GM13977 (cell line): ENCODE measurements at regions of chr9 and their contacts with region 1.

Region 1: DNA sequence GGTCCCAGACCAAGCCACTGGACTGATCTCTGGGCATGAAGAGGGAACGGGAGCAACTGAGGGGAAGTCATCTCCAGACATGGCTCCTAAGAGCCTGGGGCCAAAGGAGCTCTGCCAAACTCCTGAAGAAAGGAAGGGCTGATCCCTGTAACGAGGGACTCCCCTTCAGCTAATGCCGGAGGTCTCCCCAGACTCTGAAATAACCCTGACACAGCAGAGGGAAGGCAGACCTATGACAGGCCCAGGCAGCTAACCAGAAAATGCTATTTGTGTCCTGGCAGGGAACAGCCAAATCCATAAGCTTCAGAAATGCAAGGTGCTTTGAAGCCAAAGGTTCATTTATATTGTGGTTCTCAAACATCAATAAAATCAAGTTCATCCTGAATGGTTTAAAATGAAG is 30.9 kb downstream of the APTX start:
- DNase-seq: no peak
- CTCF ChIP-seq: no peak

Region 2: GRCh38 chr9:32378993-32379729 is 591.4 kb before region 1 on chr9:
- in situ Hi-C with region 1: loop called (anchors 10 kb)
- DNase-seq: peak; percentile 67
- CTCF ChIP-seq: peak; percentile 84

Region 3: DNA sequence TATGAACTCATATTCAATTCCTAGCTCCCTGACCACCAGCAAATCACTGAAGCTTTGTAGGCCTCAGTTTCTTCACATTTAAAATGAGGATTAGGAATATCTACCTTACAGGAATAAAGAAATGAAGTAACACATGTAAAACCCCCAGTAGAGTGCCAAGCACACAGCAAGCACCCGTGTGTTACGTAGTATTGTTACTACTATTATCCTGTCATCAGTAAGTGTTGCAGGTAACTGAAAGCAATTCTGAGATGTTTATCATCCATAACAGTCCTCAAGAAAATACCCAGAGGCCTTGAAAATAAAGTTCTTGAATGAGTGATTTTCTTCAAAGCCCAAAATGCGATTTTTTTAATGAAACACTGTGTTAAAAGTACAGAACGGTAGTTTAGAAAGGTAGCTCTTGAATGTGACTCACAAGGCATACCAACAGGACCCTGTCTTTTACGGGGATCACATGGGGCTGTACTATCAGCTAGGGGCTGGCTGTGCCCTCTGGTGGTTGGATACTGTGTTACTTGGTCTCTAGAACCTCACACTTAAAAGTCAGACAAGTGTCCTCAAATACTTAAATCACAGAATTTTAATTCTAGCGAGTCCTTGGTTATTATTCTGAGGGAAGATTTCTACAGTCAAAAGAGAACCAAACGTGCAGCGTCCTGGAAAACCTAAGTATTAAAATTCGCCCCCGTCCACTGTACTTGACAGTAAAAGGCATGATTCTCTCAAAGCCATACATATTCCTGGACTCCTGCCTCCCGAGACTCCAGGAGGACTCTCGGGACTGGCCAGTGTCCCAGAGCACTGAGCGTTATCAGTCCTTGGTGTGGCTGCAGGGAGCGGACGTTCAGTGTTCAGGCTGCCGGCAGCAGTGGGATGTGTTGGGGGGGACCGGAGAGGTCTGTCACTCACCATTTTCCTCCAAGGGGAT is 398.3 kb before region 1 on chr9:
- in situ Hi-C with region 1: loop called (anchors 10 kb)
- DNase-seq: peak; percentile 77
- CTCF ChIP-seq: peak; percentile 76

Region 4: DNA sequence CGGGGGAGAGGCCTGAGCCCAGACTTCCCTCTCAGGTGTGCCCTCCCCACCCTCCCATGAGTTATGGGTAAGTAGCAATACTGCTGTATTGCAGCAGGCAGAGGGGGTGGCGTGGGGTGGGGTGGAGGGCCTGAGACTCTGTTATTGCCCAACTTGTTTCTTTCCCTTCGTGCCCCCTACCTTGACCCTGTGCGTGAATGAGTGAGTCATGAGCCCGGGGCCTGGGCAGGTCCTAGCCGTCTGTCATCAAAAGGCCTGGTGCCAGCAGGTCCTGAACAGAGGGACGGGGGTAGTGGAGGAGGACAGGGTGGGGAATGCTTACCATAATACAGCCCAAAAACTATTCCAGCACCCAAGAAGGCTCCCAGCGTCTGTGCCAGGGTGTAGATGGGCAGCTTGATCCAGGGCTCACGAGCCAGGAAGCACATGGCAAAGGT is 472.5 kb after region 1 on chr9:
- in situ Hi-C with region 1: no loop called
- DNase-seq: no peak
- CTCF ChIP-seq: no peak